CD4-positive, alpha-beta T cell (primary cell): ENCODE measurements at regions of chr9 and their contacts with region 1.

Region 1: DNA sequence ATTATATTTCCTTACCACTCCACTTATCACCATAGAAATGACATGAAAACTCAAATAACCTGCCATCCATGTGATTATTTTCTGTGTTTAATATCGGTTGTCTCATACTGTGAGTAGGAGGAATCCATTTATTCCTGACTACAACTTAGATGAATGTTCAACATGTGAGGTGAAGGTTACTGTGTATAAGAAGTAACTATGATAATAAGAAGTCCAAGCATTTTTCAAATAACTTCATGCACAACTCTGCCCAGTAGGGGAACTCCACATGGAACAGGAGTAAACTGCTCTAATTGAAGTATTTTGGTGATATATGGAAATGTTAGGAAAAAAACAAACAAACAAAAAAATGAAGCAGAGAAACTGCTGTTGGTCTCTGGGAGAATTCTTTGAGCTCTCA is 447.5 kb upstream of the GRIN3A start:
- DNase-seq: no peak
- ATAC-seq: no peak
- H3K4me3 ChIP-seq: no peak overlapping the region
- H3K4me3 Mint-ChIP-seq: no peak overlapping the region
- H3K27ac ChIP-seq: no peak overlapping the region
- H3K27ac Mint-ChIP-seq: no peak overlapping the region
- H3K4me1 ChIP-seq: no peaks in the 10 kb centered on the region
- H3K4me1 Mint-ChIP-seq: no peaks in the 10 kb centered on the region
- H3K27me3 ChIP-seq: no peaks in the 10 kb centered on the region
- H3K27me3 Mint-ChIP-seq: no peaks in the 10 kb centered on the region
- CTCF ChIP-seq: no peak

Region 2: DNA sequence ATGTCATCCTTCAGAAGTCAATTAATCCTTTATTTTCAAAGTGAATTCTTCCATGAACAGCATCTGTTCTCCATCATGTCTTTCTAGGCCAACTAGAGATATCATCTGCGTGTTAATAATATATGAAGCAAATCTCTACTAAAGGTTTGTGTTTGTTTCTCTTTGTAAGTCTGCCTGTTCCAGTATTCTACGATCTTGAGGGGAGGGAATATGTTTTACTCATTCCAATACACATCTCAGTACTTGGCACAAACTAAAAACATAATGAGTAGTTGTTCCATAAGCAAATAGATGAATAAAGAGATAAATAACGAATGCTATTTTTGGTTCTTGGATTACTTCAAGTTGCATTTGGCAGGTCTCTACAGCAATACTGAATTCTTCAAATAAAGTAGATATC is 23.2 kb after region 1 on chr9:
- CTCF ChIA-PET with region 1: no interaction called
- POLR2A ChIA-PET with region 1: no interaction called
- intact Hi-C with region 1: loop called in 1 of 2 experiments (anchors 1 kb)
- DNase-seq: no peak
- ATAC-seq: no peak
- H3K4me3 ChIP-seq: no peak overlapping the region
- H3K4me3 Mint-ChIP-seq: no peak overlapping the region
- H3K27ac ChIP-seq: no peak overlapping the region
- H3K27ac Mint-ChIP-seq: no peak overlapping the region
- H3K4me1 ChIP-seq: no peaks in the 10 kb centered on the region
- H3K4me1 Mint-ChIP-seq: no peaks in the 10 kb centered on the region
- H3K27me3 ChIP-seq: no peaks in the 10 kb centered on the region
- H3K27me3 Mint-ChIP-seq: no peaks in the 10 kb centered on the region
- CTCF ChIP-seq: no peak

Region 3: DNA sequence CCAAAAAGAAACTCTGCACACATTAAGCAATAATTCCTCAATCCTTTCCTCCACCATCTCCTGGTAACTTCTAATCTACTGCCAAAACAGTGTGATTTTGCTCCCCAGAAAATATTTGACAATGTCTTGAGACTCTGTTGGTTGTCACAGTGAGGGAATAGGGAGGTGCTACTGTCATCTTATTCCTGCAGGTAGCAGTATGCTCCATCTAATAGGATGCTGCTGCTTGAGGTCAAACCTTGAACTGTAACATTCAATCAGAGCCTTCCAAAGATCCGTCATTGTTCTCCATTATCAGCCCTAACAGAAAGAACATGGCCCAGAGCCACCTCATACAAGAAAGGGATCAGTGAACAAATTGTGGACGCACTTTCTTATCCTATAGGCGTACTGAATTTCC is 67.1 kb after region 1 on chr9:
- CTCF ChIA-PET with region 1: no interaction called
- POLR2A ChIA-PET with region 1: no interaction called
- intact Hi-C with region 1: loop called in 1 of 2 experiments (anchors 10 kb)
- DNase-seq: no peak
- ATAC-seq: no peak
- H3K4me3 ChIP-seq: no peak overlapping the region
- H3K4me3 Mint-ChIP-seq: no peak overlapping the region
- H3K27ac ChIP-seq: no peak overlapping the region
- H3K27ac Mint-ChIP-seq: no peak overlapping the region
- H3K4me1 ChIP-seq: no peaks in the 10 kb centered on the region
- H3K4me1 Mint-ChIP-seq: no peaks in the 10 kb centered on the region
- H3K27me3 ChIP-seq: no peaks in the 10 kb centered on the region
- H3K27me3 Mint-ChIP-seq: no peaks in the 10 kb centered on the region
- CTCF ChIP-seq: no peak